GM10248 (cell line): ENCODE measurements at regions of chr3 and their contacts with region 1.

Region 1: GRCh38 chr3:17841190-17841828 is 98.9 kb upstream of the TBC1D5 start:
- DNase-seq: peak; percentile 65
- CTCF ChIP-seq: peak; percentile 98

Region 2: DNA sequence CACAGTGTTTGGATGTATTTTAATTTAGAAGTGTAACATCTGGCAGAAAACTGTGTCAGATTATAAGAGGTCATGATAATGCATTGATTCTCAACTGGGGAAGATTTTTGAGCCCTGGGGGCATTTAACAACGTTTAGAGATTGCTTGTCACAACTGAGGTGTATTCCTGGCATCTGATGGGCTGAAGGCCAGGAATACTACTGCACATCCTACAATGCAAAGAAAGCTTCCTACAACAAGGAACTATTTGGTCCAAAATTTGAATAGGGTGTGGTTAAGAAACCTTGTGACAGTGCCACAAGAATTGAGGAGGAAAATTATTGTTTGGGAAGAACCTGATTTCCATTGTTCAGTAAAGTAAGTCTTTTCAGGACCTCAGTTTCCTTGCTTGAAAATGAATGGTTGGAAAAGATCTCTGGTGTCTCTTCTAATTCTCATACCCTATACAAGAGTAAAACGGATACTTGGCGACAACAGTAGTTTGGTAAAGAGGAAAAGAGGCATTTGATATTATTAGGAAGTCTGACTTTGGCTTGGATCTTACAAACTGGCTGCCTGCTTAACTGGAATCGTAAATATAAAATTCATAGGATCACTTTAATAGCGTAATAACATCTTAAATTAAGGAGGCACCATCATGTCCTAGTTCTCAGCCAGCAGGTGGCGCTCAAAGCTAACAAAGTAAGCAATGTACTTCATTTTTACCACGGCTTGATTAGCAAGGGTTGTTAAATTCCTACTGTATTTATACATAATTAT is 1240.3 kb before region 1 on chr3:
- CTCF ChIA-PET with region 1: interaction called, 13 read pairs
- POLR2A ChIA-PET with region 1: no interaction called
- DNase-seq: peak; percentile 56
- CTCF ChIP-seq: peak; percentile 78

Region 3: GRCh38 chr3:17258823-17259436 is 582.4 kb before region 1 on chr3:
- CTCF ChIA-PET with region 1: interaction called, 14 read pairs
- POLR2A ChIA-PET with region 1: no interaction called
- DNase-seq: peak; percentile 45
- CTCF ChIP-seq: peak; percentile 72

Region 4: DNA sequence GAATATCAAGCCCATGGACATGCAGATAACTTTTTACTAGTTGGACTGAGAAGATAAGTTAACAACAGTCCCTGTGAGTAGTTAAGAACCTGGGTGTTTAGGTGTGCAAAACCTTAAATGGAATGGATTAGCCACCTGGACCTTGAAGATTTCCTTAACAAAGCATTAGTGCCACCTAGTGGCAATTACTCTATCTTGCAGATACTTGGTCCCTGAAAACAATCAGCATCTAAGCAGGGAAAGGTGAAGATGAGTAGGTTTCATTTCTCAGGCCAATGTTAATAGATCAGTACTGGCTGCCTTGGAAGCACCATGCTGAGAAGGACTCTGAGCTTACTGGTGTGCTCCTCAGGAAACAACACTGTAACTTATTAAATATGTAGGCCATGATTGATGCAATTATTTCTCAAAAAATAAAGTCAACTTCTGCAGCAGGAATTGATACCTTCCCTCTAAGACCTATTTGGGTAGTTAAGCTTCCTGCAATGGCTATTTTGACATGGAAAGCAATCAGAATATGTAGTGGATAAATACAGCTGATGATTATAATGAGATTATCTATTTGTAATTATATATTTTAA is 428.3 kb before region 1 on chr3:
- CTCF ChIA-PET with region 1: interaction called, 22 read pairs
- POLR2A ChIA-PET with region 1: no interaction called
- DNase-seq: peak; percentile 33
- CTCF ChIP-seq: peak; percentile 68

Region 5: DNA sequence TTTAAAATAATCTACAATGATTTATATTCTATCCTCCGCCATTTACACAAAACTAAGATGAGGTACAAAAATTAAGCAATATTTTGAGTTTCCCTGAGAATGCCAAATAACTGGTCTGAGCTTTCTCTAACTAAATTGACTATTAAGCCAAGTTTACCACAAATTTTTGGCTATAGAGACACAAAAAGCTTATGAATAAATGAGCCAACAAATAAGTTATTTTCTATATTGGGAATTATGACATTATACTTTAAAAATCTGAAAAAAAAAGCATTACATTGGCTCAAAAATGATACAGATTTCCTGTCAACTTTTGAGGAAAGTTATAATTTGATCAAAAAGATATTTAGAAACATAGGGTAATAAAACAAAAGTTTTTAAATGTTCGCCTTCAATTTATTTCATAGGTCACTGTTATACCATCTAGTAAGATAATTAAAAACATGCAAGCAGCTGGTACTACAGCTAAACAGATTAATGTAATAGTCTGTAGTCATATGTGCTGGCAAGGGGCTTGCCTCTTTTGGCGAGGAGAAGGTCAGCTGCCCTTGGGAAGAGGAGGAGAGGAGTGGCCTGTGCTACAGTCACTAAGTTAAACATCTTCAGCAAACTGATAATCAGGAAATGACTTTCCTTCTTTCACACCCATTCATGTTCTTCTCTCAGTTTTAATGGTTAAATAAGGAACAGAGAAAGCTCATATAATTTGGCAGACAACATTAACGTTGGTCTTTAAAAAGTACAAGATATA is 417.3 kb before region 1 on chr3:
- CTCF ChIA-PET with region 1: interaction called, 87 read pairs
- POLR2A ChIA-PET with region 1: no interaction called
- DNase-seq: peak; percentile 10
- CTCF ChIP-seq: no peak

Region 6: GRCh38 chr3:17431004-17431403 is 410.3 kb before region 1 on chr3:
- CTCF ChIA-PET with region 1: interaction called, 87 read pairs
- POLR2A ChIA-PET with region 1: no interaction called
- DNase-seq: peak; percentile 28
- CTCF ChIP-seq: peak; percentile 44

Region 7: DNA sequence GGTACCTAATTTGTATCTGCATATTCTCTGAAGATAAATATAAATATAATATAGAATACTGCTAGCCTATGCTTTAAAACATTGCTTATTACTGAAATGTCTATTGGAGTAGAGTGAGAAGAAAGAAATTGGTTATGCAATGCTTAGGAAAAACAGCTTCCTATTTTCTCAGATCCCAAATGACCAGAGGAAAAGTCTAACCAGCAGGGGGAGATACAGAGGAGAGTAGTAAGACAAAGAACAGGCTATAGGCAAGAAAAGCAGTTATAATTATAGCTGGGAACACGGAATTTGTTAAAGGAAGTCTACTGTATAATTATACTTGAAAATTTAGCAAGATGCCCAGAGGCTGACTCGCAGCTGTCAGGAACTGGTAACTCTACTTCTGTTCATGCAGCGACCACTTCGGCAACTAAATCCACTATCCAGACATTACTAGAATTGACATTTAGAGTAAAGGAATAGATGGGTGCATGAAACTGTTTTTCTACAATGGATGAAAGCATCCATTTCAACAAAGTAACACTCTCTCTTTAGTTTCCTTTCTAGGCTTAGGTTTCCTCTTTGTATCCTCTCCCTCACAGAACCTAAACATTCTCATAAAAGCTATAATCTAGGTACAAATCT is 196.1 kb before region 1 on chr3:
- CTCF ChIA-PET with region 1: interaction called, 27 read pairs
- POLR2A ChIA-PET with region 1: no interaction called
- DNase-seq: no peak
- CTCF ChIP-seq: peak; percentile 55